ENCODE measurements at regions of chr1 and their contacts with region 1.

Region 1: GRCh38 chr1:175023043-175023921 is at the start of gene MRPS14:
- DNase-seq: peak; percentile 91
- ATAC-seq: peak; percentile 93
- H3K4me3 Mint-ChIP-seq: peak within 1 kb of the TSS; percentile 95
- H3K27ac Mint-ChIP-seq: peak within 1 kb of the TSS; percentile 90
- H3K4me1 Mint-ChIP-seq: peaks cover 29% of the 10 kb centered on the region
- H3K27me3 Mint-ChIP-seq: no peaks in the 10 kb centered on the region
- CTCF ChIP-seq: no peak
- total RNA-seq, gene MRPS14: 36.5 and 36.9 TPM in 2 replicates

Region 2: GRCh38 chr1:173476664-173477285 is 1546.5 kb before region 1 on chr1:
- CTCF ChIA-PET with region 1: no interaction called
- POLR2A ChIA-PET with region 1: interaction called, 7 read pairs
- intact Hi-C with region 1: loop called (anchors 5 kb)
- DNase-seq: peak; percentile 70
- ATAC-seq: peak; percentile 94
- H3K4me3 Mint-ChIP-seq: peak overlapping the region; percentile 92
- H3K27ac Mint-ChIP-seq: peak overlapping the region; percentile 95
- H3K4me1 Mint-ChIP-seq: peaks cover 40% of the 10 kb centered on the region
- H3K27me3 Mint-ChIP-seq: no peaks in the 10 kb centered on the region
- CTCF ChIP-seq: no peak

Region 3: DNA sequence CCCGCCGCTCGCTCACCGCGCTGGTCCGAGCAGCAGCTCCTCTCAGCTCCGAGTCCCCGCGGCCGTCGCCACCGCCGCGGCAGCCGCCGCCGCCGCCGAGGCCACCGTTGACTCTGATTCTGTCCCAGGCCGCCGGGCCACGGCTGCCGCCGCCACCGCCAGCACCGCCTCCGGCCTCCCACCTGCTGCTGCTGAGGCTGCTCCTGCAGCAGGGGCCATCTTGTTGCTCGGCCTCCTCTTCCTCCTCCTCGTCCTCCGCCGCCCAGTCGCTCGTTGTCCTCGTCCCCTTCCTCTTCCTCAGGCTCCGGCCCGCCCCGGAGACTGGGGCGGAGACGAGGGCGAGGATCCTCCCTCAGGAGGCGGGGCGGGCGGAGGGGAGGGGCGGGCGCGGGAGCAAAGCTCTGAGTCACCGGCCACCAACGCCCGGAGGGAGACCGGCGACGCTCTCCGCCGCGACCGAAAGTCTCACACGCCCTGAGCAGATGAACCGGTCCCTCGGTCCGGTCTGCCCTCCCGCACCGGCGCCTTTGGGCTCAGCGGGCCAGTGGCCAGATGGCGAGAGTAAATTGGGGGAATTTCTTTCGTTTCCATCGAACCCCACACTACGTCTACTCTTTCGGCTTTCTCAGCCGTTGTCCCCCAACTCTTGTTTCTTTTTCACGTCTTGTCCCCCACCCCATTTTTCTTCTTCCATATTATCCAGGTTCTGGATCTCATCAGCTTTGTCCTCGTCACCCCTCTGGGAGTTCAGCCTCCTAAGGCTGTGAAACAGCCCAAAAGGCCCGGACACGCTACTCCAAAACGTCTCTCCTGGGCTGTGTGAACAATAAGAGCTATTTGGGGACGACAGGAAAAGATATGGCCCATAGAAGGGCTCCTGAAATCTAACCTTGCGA is 1001.0 kb before region 1 on chr1 and contains the start of gene RC3H1:
- CTCF ChIA-PET with region 1: no interaction called
- POLR2A ChIA-PET with region 1: interaction called, 3 read pairs
- intact Hi-C with region 1: loop called (anchors 5 kb)
- DNase-seq: peak; percentile 88
- ATAC-seq: peak; percentile 93
- H3K4me3 Mint-ChIP-seq: peak within 1 kb of the TSS; percentile 97
- H3K27ac Mint-ChIP-seq: peak within 1 kb of the TSS; percentile 96
- H3K4me1 Mint-ChIP-seq: peaks cover 42% of the 10 kb centered on the region
- H3K27me3 Mint-ChIP-seq: no peaks in the 10 kb centered on the region
- CTCF ChIP-seq: no peak
- total RNA-seq, gene RC3H1: 45.6 and 55.6 TPM in 2 replicates

Region 4: GRCh38 chr1:174953285-174954072 is 69.8 kb before region 1 on chr1:
- CTCF ChIA-PET with region 1: no interaction called
- POLR2A ChIA-PET with region 1: interaction called, 10 read pairs
- intact Hi-C with region 1: no loop called
- DNase-seq: no peak
- ATAC-seq: peak; percentile 67
- H3K4me3 Mint-ChIP-seq: peak overlapping the region; percentile 70
- H3K27ac Mint-ChIP-seq: peak overlapping the region; percentile 79
- H3K4me1 Mint-ChIP-seq: peaks cover 51% of the 10 kb centered on the region
- H3K27me3 Mint-ChIP-seq: no peaks in the 10 kb centered on the region
- CTCF ChIP-seq: no peak

Region 5: GRCh38 chr1:175192630-175193526 is 169.6 kb after region 1 on chr1 and contains the start of gene KIAA0040:
- CTCF ChIA-PET with region 1: no interaction called
- POLR2A ChIA-PET with region 1: interaction called, 10 read pairs
- intact Hi-C with region 1: no loop called
- DNase-seq: peak; percentile 54
- ATAC-seq: peak; percentile 53
- H3K4me3 Mint-ChIP-seq: peak within 1 kb of the TSS; percentile 99
- H3K27ac Mint-ChIP-seq: peak within 1 kb of the TSS; percentile 97
- H3K4me1 Mint-ChIP-seq: peaks cover 92% of the 10 kb centered on the region
- H3K27me3 Mint-ChIP-seq: no peaks in the 10 kb centered on the region
- CTCF ChIP-seq: no peak
- total RNA-seq, gene KIAA0040: 55.5 and 57.2 TPM in 2 replicates

Region 6: GRCh38 chr1:175319418-175320230 is 296.3 kb after region 1 on chr1:
- CTCF ChIA-PET with region 1: no interaction called
- POLR2A ChIA-PET with region 1: no interaction called
- intact Hi-C with region 1: loop called (anchors 2 kb)
- DNase-seq: peak; percentile 50
- ATAC-seq: peak; percentile 87
- H3K4me3 Mint-ChIP-seq: peak overlapping the region; percentile 76
- H3K27ac Mint-ChIP-seq: peak overlapping the region; percentile 42
- H3K4me1 Mint-ChIP-seq: peaks cover 29% of the 10 kb centered on the region
- H3K27me3 Mint-ChIP-seq: no peaks in the 10 kb centered on the region
- CTCF ChIP-seq: no peak

Region 7: GRCh38 chr1:176880954-176881595 is 1857.8 kb after region 1 on chr1:
- CTCF ChIA-PET with region 1: no interaction called
- POLR2A ChIA-PET with region 1: no interaction called
- intact Hi-C with region 1: loop called (anchors 5 kb)
- DNase-seq: no peak
- ATAC-seq: no peak
- H3K4me3 Mint-ChIP-seq: no peak overlapping the region
- H3K27ac Mint-ChIP-seq: no peak overlapping the region
- H3K4me1 Mint-ChIP-seq: no peaks in the 10 kb centered on the region
- H3K27me3 Mint-ChIP-seq: peaks cover 5% of the 10 kb centered on the region
- CTCF ChIP-seq: peak; percentile 43